ENCODE measurements at regions of chr2 and their contacts with region 1.

Region 1: GRCh38 chr2:159720676-159721075 is 8.4 kb downstream of the MARCHF7 start:
- DNase-seq: no peak
- ATAC-seq: no peak
- H3K4me3 ChIP-seq: no peak overlapping the region
- H3K4me3 Mint-ChIP-seq: no peak overlapping the region
- H3K27ac ChIP-seq: no peak overlapping the region
- H3K27ac Mint-ChIP-seq: peak overlapping the region; percentile 65
- H3K4me1 ChIP-seq: peaks cover 72% of the 10 kb centered on the region
- H3K4me1 Mint-ChIP-seq: peaks cover 94% of the 10 kb centered on the region
- H3K27me3 ChIP-seq: no peaks in the 10 kb centered on the region
- H3K27me3 Mint-ChIP-seq: no peaks in the 10 kb centered on the region
- CTCF ChIP-seq: no peak

Region 2: GRCh38 chr2:158130832-158131473 is 1589.7 kb before region 1 on chr2:
- CTCF ChIA-PET with region 1: no interaction called
- POLR2A ChIA-PET with region 1: no interaction called
- intact Hi-C with region 1: no loop called
- DNase-seq: no peak
- ATAC-seq: no peak
- H3K4me3 ChIP-seq: no peak overlapping the region
- H3K4me3 Mint-ChIP-seq: no peak overlapping the region
- H3K27ac ChIP-seq: no peak overlapping the region
- H3K27ac Mint-ChIP-seq: no peak overlapping the region
- H3K4me1 ChIP-seq: no peaks in the 10 kb centered on the region
- H3K4me1 Mint-ChIP-seq: no peaks in the 10 kb centered on the region
- H3K27me3 ChIP-seq: no peaks in the 10 kb centered on the region
- H3K27me3 Mint-ChIP-seq: peaks cover 2% of the 10 kb centered on the region
- CTCF ChIP-seq: no peak

Region 3: GRCh38 chr2:159769147-159769546 is 48.5 kb after region 1 on chr2:
- CTCF ChIA-PET with region 1: no interaction called
- POLR2A ChIA-PET with region 1: no interaction called
- intact Hi-C with region 1: loop called in 1 of 2 experiments (anchors 5 kb)
- DNase-seq: no peak
- ATAC-seq: no peak
- H3K4me3 ChIP-seq: no peak overlapping the region
- H3K4me3 Mint-ChIP-seq: no peak overlapping the region
- H3K27ac ChIP-seq: no peak overlapping the region
- H3K27ac Mint-ChIP-seq: no peak overlapping the region
- H3K4me1 ChIP-seq: no peaks in the 10 kb centered on the region
- H3K4me1 Mint-ChIP-seq: no peaks in the 10 kb centered on the region
- H3K27me3 ChIP-seq: no peaks in the 10 kb centered on the region
- H3K27me3 Mint-ChIP-seq: no peaks in the 10 kb centered on the region
- CTCF ChIP-seq: no peak